Activated CD4-positive, alpha-beta T cell treated with anti-CD3 and anti-CD28 coated beads, Interleukin-2, amount 10 ng/mL, durations not matched to agents 24 days and 14 days (primary cell): ENCODE measurements at regions of chr19 and their contacts with region 1.

Region 1: DNA sequence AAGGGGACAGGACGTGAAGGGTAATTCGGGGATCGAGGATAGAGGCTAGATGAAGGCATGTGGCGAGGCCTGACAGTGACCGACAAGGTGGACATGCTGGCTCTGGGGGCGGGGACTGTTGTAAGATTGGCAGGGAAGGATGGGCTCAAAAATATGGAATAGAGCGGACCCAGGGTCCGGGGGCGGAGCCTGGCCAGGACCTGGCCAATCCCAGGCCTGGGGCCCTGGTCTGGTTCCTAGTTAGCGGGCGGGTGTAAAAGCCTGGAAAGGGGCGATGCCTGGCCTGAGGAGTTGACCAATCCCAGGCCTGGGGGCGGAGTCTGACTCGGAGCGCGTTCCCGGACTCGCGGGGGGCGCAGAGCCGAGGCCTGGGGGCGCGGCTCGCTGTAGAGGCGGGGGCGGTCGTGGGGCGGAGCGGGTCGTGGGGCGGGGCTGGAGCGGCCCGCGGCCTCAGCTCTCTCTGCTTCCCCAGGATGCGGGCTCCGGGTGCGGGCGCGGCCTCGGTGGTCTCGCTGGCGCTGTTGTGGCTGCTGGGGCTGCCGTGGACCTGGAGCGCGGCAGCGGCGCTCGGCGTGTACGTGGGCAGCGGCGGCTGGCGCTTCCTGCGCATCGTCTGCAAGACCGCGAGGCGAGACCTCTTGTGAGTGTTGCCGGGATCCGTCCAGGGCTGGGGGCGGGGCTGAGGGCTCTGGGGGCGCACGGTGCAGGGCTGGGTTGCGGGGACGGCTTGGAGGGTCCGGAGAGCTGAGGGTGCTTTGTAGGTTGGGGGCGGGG is at the start of gene SLC27A1:
- DNase-seq: peak; percentile 96
- H3K4me3 Mint-ChIP-seq: peak within 1 kb of the TSS; percentile 100
- H3K27ac Mint-ChIP-seq: peak within 1 kb of the TSS; percentile 92
- H3K4me1 Mint-ChIP-seq: peaks cover 30% of the 10 kb centered on the region
- H3K27me3 Mint-ChIP-seq: peaks cover 18% of the 10 kb centered on the region
- total RNA-seq, gene SLC27A1: 1.8 and 2.5 TPM in 2 replicates

Region 2: GRCh38 chr19:17346109-17346671 is 124.1 kb before region 1 on chr19:
- intact Hi-C with region 1: loop called (anchors 1 kb)
- DNase-seq: peak; percentile 95
- H3K4me3 Mint-ChIP-seq: peak overlapping the region; percentile 23
- H3K27ac Mint-ChIP-seq: no peak overlapping the region
- H3K4me1 Mint-ChIP-seq: peaks cover 7% of the 10 kb centered on the region
- H3K27me3 Mint-ChIP-seq: peaks cover 4% of the 10 kb centered on the region

Region 3: DNA sequence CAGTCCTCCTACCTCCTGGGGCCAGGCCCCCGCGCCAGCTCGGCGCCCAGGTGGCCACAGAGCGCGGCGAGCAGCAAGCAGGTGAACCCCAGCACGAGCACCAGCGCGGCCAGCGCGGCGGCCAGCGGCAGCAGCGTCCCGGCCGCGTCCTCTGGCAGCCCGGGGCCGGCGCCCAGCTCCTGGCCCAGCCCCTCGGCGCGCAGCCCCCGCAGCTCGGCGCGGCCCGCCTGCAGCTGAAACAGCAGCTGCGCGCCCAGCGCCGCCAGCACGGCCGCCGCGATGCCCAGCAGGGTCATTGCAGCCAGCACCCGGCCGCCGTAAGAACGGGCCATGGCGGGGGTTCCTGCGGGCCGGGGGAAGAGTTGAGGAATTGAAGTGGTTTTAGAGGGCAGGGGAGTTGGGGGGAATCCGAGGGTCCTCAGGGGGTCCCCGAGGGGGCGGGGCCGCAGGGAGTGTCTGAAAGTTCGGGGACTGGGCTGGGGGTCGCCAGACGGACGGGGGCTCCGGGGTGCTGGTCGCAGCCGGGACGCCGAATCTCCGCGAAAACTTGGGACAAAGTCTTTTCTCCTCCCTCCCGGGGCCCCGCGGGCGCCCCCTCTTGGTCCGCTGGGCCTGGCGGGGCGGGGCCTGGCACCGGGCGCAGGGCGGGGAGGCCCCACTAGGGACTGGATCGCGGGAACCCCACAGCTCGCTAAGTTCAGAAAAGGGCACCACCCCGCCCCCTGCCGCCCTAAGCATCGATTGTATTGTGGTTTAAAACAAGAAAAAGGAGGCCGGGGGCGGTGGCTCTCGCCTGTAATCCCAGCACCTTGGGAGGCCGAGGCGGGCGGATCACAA is 21.9 kb before region 1 on chr19 and contains the start of gene TMEM221:
- intact Hi-C with region 1: loop called (anchors 1 kb)
- DNase-seq: peak; percentile 86
- H3K4me3 Mint-ChIP-seq: peak within 1 kb of the TSS; percentile 38
- H3K27ac Mint-ChIP-seq: no peak within 1 kb of the TSS
- H3K4me1 Mint-ChIP-seq: peaks cover 12% of the 10 kb centered on the region
- H3K27me3 Mint-ChIP-seq: peaks cover 12% of the 10 kb centered on the region
- total RNA-seq, gene TMEM221: not detected in 2 replicates

Region 4: DNA sequence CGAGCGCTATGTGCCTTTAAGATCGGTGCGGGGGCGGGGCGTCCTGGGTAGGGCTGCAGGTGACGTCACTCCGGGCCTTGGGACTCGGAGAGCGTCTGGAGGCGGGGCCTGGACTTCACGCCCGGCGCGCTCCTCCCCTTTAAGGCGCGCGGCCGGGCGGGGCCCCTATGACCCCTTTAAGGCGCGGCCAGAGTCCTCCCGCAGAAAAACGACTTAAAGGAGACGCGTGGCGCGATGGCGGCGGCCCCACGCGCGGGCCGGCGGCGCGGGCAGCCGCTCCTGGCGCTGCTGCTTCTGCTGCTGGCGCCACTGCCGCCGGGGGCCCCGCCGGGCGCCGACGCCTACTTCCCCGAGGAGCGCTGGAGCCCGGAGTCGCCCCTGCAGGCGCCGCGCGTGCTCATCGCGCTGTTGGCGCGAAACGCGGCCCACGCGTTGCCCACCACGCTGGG is 85.2 kb after region 1 on chr19 and contains the start of gene COLGALT1:
- intact Hi-C with region 1: loop called (anchors 1 kb)
- DNase-seq: peak; percentile 100
- H3K4me3 Mint-ChIP-seq: peak within 1 kb of the TSS; percentile 90
- H3K27ac Mint-ChIP-seq: peak within 1 kb of the TSS; percentile 83
- H3K4me1 Mint-ChIP-seq: peaks cover 13% of the 10 kb centered on the region
- H3K27me3 Mint-ChIP-seq: no peaks in the 10 kb centered on the region
- total RNA-seq, gene COLGALT1: 103 and 106 TPM in 2 replicates